ENCODE measurements at regions of chr9 and their contacts with region 1.

Region 1: DNA sequence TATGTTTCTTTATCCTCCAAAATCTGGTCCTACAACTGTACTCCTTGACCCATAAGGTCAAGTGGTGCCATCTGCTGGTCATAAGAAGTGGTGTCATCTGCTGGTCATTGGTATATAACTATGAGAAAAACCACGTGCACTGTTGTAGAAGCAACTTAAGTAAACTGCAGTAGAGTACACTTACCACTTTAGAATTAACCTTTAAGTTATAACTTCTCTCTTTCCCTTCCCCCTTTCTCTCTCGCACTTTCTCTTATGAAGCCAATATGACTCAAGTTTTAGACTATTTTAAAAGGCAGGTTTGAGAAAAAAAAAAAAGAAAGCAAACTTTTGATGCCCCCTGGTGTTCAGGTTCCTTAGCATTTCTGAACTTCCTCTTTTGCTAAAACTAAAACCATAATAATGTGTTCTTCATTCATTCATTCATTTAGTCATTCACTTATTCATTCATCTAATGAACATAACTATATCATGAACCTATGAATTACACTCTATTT is 12.8 kb upstream of the MTAP start:
- DNase-seq: no peak
- H3K4me3 Mint-ChIP-seq: peak overlapping the region; percentile 47
- H3K27ac Mint-ChIP-seq: peak overlapping the region; percentile 60
- H3K4me1 Mint-ChIP-seq: peaks cover 32% of the 10 kb centered on the region
- H3K27me3 Mint-ChIP-seq: no peaks in the 10 kb centered on the region
- CTCF ChIP-seq: peak; percentile 68

Region 2: DNA sequence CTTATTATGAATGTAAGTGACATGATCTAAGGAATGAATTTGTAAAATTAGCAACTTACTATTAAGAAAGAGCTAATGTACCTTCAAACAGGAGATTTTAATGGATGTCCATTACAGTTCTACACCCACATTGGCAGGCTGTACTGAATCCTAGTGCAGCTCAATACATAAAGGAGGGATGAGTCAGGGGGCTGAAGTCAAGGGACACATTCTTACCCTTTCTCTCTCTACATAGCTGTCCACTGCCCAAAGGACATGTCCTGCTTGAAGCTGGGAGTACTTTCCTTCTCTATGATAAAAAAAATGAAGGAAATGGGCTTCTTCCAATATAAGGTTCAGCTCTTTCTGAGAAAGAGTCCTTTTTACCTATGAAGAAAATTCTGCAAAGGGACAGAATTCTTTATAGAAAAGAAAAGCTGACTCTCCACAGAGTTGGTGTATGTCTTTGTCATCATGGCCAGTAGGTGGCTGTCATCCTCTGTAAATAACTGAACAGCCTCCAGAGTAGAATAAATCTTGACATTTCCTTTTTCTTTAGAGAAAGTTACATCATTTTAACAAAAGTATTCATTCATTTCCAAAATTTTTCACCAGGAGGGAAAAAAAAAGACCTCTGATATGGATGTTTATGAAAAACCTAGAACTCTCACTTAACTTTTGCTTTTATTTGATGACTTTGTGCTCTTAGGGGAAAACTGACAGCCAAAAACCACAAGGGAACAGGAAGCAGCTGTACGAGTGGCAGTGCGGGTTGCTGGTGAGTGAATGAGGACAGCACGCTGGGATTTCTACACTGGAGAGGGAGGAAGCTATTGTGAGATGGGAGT is 536.7 kb before region 1 on chr9:
- CTCF ChIA-PET with region 1: no interaction called
- intact Hi-C with region 1: loop called (anchors 2 kb)
- DNase-seq: peak; percentile 21
- H3K4me3 Mint-ChIP-seq: no peak overlapping the region
- H3K27ac Mint-ChIP-seq: no peak overlapping the region
- H3K4me1 Mint-ChIP-seq: peaks cover 16% of the 10 kb centered on the region
- H3K27me3 Mint-ChIP-seq: peaks cover 11% of the 10 kb centered on the region
- CTCF ChIP-seq: peak; percentile 33

Region 3: GRCh38 chr9:21434202-21435014 is 355.2 kb before region 1 on chr9:
- CTCF ChIA-PET with region 1: interaction called, 3 read pairs
- intact Hi-C with region 1: loop called (anchors 1 kb)
- DNase-seq: peak; percentile 57
- H3K4me3 Mint-ChIP-seq: no peak overlapping the region
- H3K27ac Mint-ChIP-seq: no peak overlapping the region
- H3K4me1 Mint-ChIP-seq: no peaks in the 10 kb centered on the region
- H3K27me3 Mint-ChIP-seq: no peaks in the 10 kb centered on the region
- CTCF ChIP-seq: peak; percentile 8

Region 4: DNA sequence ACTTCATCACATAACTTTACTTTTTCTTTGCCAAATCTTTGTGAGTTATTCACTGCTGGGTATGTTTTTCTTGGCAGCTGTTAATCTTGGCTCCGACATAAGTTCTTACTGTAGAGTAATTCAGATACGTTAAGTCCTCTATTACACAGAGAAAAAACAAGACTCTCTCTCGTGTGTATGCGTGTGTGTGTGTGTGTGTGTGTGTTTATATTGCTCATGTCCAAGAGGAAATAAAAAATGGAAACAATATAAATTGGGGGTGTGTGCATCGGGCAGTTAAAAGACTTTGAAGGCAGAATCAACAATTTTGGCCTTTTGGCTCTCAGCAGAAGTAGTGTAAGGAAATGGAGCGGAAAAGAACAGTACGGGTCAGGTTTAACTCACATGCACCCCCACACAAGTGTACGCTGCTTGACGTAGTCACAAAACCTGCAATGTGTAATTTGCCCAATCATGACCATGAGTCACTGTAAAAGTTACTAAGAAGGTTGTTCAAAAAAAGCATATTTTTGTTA is 240.3 kb before region 1 on chr9:
- CTCF ChIA-PET with region 1: no interaction called
- intact Hi-C with region 1: loop called (anchors 5 kb)
- DNase-seq: peak; percentile 27
- H3K4me3 Mint-ChIP-seq: peak overlapping the region; percentile 83
- H3K27ac Mint-ChIP-seq: peak overlapping the region; percentile 96
- H3K4me1 Mint-ChIP-seq: peaks cover 41% of the 10 kb centered on the region
- H3K27me3 Mint-ChIP-seq: no peaks in the 10 kb centered on the region
- CTCF ChIP-seq: no peak

Region 5: DNA sequence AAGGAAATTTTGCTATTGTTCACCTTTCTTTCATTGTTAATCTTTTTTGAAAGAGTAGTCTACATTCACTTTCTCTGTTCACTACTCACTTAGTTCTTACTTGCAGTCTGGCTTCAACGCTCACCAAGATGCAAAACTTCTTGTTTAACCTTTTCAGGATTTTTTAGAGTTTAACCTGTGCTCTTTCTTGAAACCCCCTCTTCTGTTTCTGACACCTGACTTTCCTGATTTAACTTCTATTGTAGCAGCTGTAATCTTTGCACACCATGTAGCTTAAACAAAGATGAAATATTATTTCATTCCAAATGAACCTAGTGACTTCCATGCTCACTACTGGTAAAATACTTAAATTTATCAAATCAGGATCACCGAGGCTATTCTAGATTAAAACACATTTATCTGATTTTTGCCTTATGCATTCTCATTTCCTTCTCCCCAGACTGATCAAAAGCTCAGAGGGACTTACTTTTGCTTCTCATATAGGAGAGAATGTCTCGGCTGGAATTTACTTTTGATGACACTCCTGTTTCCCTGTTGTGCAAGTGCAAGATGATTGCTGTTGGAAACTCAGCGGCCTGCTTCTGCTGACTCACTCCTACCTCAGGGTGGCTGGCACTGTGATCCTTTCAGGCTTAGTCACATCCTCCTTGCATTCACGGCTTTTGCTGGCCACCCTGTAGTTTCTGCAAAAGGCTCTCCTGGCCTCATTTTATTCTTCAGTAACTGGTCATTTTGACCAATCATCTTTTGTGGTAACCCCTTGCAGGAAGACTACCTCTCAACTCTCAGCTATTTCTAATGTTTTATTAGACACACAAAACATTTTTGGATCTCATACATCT is 198.1 kb before region 1 on chr9:
- CTCF ChIA-PET with region 1: no interaction called
- intact Hi-C with region 1: loop called (anchors 2 kb)
- DNase-seq: peak; percentile 78
- H3K4me3 Mint-ChIP-seq: peak overlapping the region; percentile 77
- H3K27ac Mint-ChIP-seq: peak overlapping the region; percentile 81
- H3K4me1 Mint-ChIP-seq: peaks cover 39% of the 10 kb centered on the region
- H3K27me3 Mint-ChIP-seq: no peaks in the 10 kb centered on the region
- CTCF ChIP-seq: no peak

Region 6: DNA sequence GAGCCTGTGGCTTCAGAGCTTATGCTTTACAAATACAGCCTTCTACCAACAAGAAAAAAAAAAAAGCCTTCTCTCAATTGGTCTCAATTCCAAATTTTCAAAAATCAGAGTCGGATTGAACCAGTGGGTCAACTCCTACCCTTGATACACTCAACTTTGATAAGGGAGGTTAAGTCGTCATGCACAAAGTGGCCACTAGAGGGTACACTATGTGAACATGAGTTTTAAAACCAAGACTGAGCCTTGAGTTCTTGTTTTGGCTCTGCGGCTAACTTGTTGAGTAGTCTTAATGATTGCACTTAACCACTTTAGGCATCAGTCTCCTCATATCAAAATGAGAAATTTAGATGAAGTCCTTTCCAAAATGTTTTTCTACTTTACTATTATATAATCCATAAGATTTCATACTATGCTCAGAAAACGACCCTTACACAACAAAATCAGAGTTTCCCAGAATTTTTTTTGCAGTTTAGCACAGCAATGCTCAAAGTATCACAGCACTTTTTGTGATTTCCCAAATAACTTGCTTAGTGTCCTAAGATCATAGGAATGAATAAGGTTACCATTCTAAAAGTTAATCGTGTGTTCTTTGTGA is 80.0 kb before region 1 on chr9:
- CTCF ChIA-PET with region 1: interaction called, 5 read pairs
- intact Hi-C with region 1: loop called (anchors 1 kb)
- DNase-seq: peak; percentile 70
- H3K4me3 Mint-ChIP-seq: no peak overlapping the region
- H3K27ac Mint-ChIP-seq: peak overlapping the region; percentile 44
- H3K4me1 Mint-ChIP-seq: peaks cover 36% of the 10 kb centered on the region
- H3K27me3 Mint-ChIP-seq: no peaks in the 10 kb centered on the region
- CTCF ChIP-seq: peak; percentile 48

Region 7: DNA sequence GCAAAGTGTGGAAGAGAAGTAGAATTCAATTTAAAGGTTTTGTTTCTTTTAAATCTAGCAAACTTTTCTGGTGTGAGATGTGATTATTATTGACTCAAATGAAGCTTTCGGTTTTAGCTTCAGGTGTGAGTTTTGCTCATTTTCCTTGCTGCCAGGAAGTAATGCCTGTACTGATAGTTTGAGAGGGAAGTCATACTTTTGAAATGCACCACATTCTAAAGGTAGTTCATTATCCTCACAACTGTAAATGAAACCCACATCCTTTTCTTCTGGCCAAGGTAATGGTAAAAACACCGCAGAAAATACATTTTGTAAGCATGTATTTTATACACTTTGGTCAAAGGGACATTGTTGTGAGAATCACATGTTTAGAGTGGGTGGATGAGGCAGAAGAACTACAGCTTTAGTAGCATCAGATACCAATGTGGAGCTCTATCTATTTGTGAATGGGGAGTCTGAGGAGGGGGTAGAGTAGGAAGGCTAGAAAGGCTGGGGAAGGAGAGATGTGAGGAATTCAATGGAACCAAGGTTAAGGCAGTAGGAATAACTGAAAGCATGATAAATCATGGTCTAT is 386.5 kb after region 1 on chr9:
- CTCF ChIA-PET with region 1: no interaction called
- intact Hi-C with region 1: no loop called
- DNase-seq: no peak
- H3K4me3 Mint-ChIP-seq: no peak overlapping the region
- H3K27ac Mint-ChIP-seq: no peak overlapping the region
- H3K4me1 Mint-ChIP-seq: peaks cover 3% of the 10 kb centered on the region
- H3K27me3 Mint-ChIP-seq: no peaks in the 10 kb centered on the region
- CTCF ChIP-seq: no peak

Measured in Calu3 (cell line).